ENCODE measurements at regions of chr12 and their contacts with region 1.

Region 1: DNA sequence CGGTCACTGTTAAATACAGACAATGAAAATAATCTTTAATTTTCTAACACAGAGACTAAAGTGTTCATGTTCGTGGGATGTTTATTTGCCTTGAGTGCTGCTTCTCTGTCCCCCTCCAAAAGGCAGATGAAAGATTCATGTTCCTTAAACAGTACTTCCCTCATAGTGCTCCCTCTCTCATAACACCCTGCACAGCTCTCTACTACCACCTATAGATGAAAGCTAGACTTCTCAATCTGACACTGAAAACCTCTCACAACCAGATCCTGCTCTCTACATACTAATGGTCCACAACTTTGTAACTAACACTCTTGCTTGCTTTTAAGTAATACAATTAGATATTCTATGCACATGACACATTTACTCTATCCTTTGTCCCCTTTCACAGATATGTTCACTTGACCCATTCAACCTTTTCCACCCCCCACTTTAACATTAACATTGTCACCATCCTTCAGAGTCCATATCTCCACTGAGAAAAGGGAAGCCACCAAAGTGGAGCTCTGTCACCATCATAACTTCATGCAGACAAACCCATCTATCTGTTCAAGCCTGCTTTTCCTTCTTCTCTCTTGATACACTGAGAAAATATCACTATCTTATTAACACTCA is 266.4 kb upstream of the USP15 start:
- DNase-seq: peak; percentile 32
- H3K4me3 ChIP-seq: no peak overlapping the region
- H3K27ac ChIP-seq: no peak overlapping the region
- H3K4me1 ChIP-seq: no peaks in the 10 kb centered on the region
- H3K27me3 ChIP-seq: no peaks in the 10 kb centered on the region
- CTCF ChIP-seq: peak; percentile 73 to 88

Region 2: GRCh38 chr12:61546318-61546717 is 447.5 kb before region 1 on chr12:
- CTCF ChIA-PET with region 1: no interaction called
- dilution Hi-C with region 1: no loop called
- in situ Hi-C with region 1: no loop called
- intact Hi-C with region 1: loop called (anchors 2 kb)
- DNase-seq: peak; percentile 57
- H3K4me3 ChIP-seq: no peak overlapping the region
- H3K27ac ChIP-seq: no peak overlapping the region
- H3K4me1 ChIP-seq: no peaks in the 10 kb centered on the region
- H3K27me3 ChIP-seq: no peaks in the 10 kb centered on the region
- CTCF ChIP-seq: peak; percentile 23 to 52

Region 3: DNA sequence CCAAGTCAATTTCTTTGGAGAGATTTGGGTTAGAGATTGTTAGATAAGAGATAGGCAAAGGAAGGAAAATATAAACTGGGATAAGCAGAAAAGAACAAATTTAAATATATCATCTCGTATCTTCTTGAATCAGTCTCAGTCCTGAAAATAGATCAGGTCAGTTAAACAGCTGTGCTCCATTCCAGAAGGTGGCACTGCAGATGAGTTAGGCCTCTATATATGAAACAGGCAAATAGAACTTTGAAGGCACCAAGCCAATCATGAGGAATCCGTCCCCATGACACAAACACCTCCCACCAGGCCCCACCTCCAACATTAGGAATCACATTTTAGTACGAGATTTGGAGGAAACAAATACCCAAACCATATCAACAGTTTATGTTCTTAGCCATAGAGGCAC is 339.1 kb before region 1 on chr12:
- CTCF ChIA-PET with region 1: no interaction called
- dilution Hi-C with region 1: no loop called
- in situ Hi-C with region 1: no loop called
- intact Hi-C with region 1: loop called (anchors 1 kb)
- DNase-seq: peak; percentile 17
- H3K4me3 ChIP-seq: no peak overlapping the region
- H3K27ac ChIP-seq: no peak overlapping the region
- H3K4me1 ChIP-seq: no peaks in the 10 kb centered on the region
- H3K27me3 ChIP-seq: no peaks in the 10 kb centered on the region
- CTCF ChIP-seq: peak; percentile 15 to 38

Region 4: DNA sequence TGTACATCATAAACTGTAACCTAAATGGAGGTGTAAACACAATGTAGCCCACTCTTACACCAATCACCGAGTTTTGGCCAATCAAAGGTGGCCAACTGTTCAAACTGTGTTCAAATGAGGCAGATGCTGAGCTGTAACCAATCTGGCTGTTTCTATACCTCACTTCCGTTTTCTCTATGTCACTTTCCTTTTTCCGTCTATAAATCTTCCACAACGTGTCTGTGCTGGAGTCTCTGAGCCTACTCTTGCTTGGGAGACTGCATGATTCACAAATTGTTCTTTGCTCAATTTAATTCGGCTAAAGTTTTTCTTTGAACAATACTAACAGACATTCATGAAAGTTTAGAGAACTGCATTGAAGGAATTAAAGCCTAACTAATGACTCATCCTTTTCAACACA is 280.7 kb before region 1 on chr12:
- CTCF ChIA-PET with region 1: no interaction called
- dilution Hi-C with region 1: no loop called
- in situ Hi-C with region 1: no loop called
- intact Hi-C with region 1: no loop called
- DNase-seq: no peak
- H3K4me3 ChIP-seq: no peak overlapping the region
- H3K27ac ChIP-seq: no peak overlapping the region
- H3K4me1 ChIP-seq: no peaks in the 10 kb centered on the region
- H3K27me3 ChIP-seq: no peaks in the 10 kb centered on the region
- CTCF ChIP-seq: no peak

Measured in mammary epithelial cell (primary cell).